ENCODE measurements at regions of chr1 and their contacts with region 1.

Region 1: DNA sequence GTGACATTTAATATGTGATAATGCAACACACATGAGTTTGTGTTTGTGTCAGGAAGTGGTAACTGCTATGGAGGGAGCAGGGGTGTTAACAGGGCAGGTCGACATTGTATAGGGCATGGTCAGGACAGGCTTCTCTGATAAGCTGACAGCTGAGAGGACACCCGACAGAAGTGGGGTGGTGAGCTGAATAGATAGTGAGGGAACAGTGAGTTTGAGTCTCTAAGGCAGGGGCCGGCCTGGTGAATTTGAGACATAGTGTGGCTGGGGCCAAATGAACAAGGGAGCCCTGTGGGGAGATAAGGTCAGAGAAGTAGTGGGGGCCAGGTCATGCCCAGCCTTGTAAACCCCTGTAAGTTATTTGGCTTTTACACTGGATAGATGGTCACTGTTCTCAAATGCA is 217.4 kb upstream of the KIAA0040 start:
- DNase-seq: no peak

Region 2: GRCh38 chr1:175353066-175353465 is 56.9 kb before region 1 on chr1:
- intact Hi-C with region 1: loop called in 1 of 2 experiments (anchors 2 kb)
- DNase-seq: no peak

Measured in posterior vena cava (tissue), 2 donors.